Transverse colon (tissue), 4 donors: ENCODE measurements at regions of chr1 and their contacts with region 1.

Region 1: GRCh38 chr1:40204856-40205255 is 42.9 kb upstream of the TMCO2 start:
- DNase-seq: no peak
- H3K4me3 ChIP-seq: no peak overlapping the region
- H3K27ac ChIP-seq: no peak overlapping the region
- H3K4me1 ChIP-seq: no peaks in the 10 kb centered on the region
- H3K27me3 ChIP-seq: no peaks in the 10 kb centered on the region
- CTCF ChIP-seq: no peak
- EP300 ChIP-seq: no peak
- POLR2A ChIP-seq: no peak

Region 2: GRCh38 chr1:40167317-40167716 is 37.5 kb before region 1 on chr1:
- in situ Hi-C with region 1: no loop called
- intact Hi-C with region 1: loop called (anchors 1 kb)
- DNase-seq: no peak
- H3K4me3 ChIP-seq: no peak overlapping the region
- H3K27ac ChIP-seq: no peak overlapping the region
- H3K4me1 ChIP-seq: peaks cover 10 to 61% (median 13%) of the 10 kb centered on the region in 4 donors
- H3K27me3 ChIP-seq: no peaks in the 10 kb centered on the region
- CTCF ChIP-seq: no peak
- EP300 ChIP-seq: no peak
- POLR2A ChIP-seq: no peak